Endothelial cell of umbilical vein (primary cell): ENCODE measurements at regions of chr4 and their contacts with region 1.

Region 1: DNA sequence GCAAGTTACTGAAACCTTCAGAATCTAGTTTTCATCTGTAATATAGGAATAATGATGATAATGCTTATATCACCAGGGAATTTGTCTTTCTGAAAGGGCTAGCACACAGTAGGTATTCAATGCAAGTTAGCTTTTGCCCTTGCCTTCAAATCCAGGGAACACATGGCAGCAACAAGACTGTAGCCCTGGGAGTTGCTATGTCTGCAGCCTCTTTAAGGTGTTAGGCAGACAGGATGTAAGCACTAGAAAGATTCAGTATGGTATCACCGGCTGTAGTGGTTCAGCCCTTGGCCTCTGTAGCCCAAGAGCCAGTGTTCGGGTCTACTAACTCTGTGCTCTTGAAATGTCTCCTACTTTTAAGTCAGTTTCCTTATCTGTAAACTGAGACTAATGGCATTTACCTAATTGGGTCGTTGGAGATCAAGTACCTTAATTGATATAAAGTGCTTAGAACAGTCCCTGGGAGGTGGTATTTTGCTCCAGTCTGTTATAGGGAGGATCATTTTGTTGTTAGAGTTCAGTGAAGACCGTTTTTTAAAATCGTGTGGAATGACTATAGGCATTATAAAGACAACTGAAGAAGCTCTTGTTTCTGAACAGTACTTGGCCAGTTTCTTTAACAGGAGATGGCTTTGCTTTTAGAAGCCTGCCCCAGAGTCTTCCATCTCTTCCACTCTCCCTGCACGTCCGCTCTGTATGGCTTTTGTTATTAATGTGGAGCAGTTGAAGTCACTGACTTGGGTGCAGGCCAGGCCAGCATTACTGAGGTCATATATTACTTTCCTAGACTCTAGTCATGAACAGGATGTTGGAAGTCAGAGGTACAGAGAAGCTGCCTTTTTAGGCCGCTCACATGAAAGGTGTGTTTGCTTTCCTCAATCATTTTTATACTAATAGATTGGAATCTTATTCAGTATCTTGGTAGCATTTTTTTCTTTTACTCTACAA is 44.8 kb downstream of the GAB1 start:
- DNase-seq: peak; percentile 98
- H3K4me3 ChIP-seq: peak overlapping the region in 1 of 3 experiments; percentile 26
- H3K27ac ChIP-seq: peak overlapping the region; percentile 53
- H3K4me1 ChIP-seq: peaks cover 24% of the 10 kb centered on the region
- H3K27me3 ChIP-seq: no peaks in the 10 kb centered on the region
- CTCF ChIP-seq: no peak
- POLR2A ChIP-seq: no peak

Region 2: GRCh38 chr4:143358923-143359643 is 22.4 kb before region 1 on chr4:
- CTCF ChIA-PET with region 1: interaction called, 7 read pairs
- POLR2A ChIA-PET with region 1: no interaction called
- dilution Hi-C with region 1: no loop called
- intact Hi-C with region 1: loop called (anchors 1 kb)
- DNase-seq: peak; percentile 96
- H3K4me3 ChIP-seq: peak overlapping the region in 1 of 3 experiments; percentile 15
- H3K27ac ChIP-seq: peak overlapping the region; percentile 54
- H3K4me1 ChIP-seq: peaks cover 26% of the 10 kb centered on the region
- H3K27me3 ChIP-seq: no peaks in the 10 kb centered on the region
- CTCF ChIP-seq: no peak
- POLR2A ChIP-seq: no peak

Region 3: DNA sequence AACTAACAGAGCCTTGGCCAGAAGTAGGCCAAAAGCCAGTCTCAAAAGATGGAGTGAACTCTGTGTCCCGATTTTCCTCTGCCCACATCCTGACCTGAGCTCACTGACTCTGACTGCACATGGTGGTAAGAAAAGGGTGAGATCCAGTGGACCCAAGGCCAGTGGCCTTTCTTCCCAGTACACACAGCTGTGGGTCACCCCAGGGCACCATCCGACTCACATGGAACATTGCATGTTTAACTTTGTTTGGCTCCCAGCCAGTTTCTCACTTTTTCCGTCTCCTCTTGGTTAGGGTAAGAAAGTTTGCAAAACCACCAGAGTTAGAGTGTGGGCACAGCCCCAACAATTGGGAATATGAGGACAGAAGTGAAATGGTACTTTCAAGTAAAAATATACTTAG is 25.1 kb after region 1 on chr4:
- CTCF ChIA-PET with region 1: no interaction called
- POLR2A ChIA-PET with region 1: no interaction called
- dilution Hi-C with region 1: no loop called
- intact Hi-C with region 1: no loop called
- DNase-seq: peak; percentile 94
- H3K4me3 ChIP-seq: no peak overlapping the region
- H3K27ac ChIP-seq: no peak overlapping the region
- H3K4me1 ChIP-seq: peaks cover 46% of the 10 kb centered on the region
- H3K27me3 ChIP-seq: no peaks in the 10 kb centered on the region
- CTCF ChIP-seq: no peak
- POLR2A ChIP-seq: no peak

Region 4: DNA sequence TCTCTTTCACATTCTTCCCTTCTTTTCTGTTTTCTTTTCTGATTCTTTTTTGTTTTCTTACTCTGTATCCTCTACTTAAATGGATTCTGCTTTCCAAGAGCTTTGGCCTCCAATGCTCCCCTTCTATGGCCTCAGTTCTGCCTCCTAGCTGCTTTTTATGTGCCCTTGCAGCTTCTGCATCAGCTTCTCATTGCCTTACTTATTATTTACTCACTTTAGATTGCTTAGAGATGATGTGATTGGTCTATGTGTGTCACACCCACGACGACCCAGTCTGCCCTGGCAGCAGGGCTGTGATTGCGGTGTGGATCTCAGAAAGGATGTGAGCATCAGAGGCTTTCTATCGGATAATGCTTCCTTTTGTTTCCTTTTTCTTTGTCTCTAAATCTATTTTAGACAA is 60.2 kb after region 1 on chr4:
- CTCF ChIA-PET with region 1: no interaction called
- POLR2A ChIA-PET with region 1: no interaction called
- dilution Hi-C with region 1: no loop called
- intact Hi-C with region 1: no loop called
- DNase-seq: no peak
- H3K4me3 ChIP-seq: no peak overlapping the region
- H3K27ac ChIP-seq: no peak overlapping the region
- H3K4me1 ChIP-seq: peaks cover 15% of the 10 kb centered on the region
- H3K27me3 ChIP-seq: no peaks in the 10 kb centered on the region
- CTCF ChIP-seq: no peak
- POLR2A ChIP-seq: no peak